GM12878 (cell line): ENCODE measurements at regions of chr2 and their contacts with region 1.

Region 1: GRCh38 chr2:127591221-127591923 is 54.6 kb upstream of the GPR17 start:
- DNase-seq: no peak
- ATAC-seq: peak; percentile 98
- H3K4me3 ChIP-seq: no peak overlapping the region
- H3K27ac ChIP-seq: no peak overlapping the region
- H3K4me1 ChIP-seq: no peaks in the 10 kb centered on the region
- H3K27me3 ChIP-seq: no peaks in the 10 kb centered on the region
- CTCF ChIP-seq: peak; percentile 96 to 99 (median 96); a peak in 5 of 6 replicates
- EP300 ChIP-seq: no peak
- POLR2A ChIP-seq: no peak
- RAD21 ChIP-seq: peak; percentile 97

Region 2: GRCh38 chr2:127563458-127564428 is 27.6 kb before region 1 on chr2:
- CTCF ChIA-PET with region 1: interaction called, 13 read pairs
- POLR2A ChIA-PET with region 1: no interaction called
- RAD21 ChIA-PET with region 1: interaction called, 6 read pairs
- SMC1A ChIA-PET with region 1: interaction called, 16 read pairs
- in situ Hi-C with region 1: no loop called
- intact Hi-C with region 1: no loop called
- DNase-seq: peak; percentile 92
- ATAC-seq: peak; percentile 92
- H3K4me3 ChIP-seq: peak overlapping the region; percentile 54
- H3K27ac ChIP-seq: peak overlapping the region; percentile 70
- H3K4me1 ChIP-seq: peaks cover 17% of the 10 kb centered on the region
- H3K27me3 ChIP-seq: 0 out of 4 replicates have a peak, but pooled peaks cover 0 to 4% of the 10 kb centered on the region in 2 experiments
- CTCF ChIP-seq: no peak
- EP300 ChIP-seq: peak; percentile 86 to 95
- POLR2A ChIP-seq: no peak
- RAD21 ChIP-seq: no peak

Region 3: DNA sequence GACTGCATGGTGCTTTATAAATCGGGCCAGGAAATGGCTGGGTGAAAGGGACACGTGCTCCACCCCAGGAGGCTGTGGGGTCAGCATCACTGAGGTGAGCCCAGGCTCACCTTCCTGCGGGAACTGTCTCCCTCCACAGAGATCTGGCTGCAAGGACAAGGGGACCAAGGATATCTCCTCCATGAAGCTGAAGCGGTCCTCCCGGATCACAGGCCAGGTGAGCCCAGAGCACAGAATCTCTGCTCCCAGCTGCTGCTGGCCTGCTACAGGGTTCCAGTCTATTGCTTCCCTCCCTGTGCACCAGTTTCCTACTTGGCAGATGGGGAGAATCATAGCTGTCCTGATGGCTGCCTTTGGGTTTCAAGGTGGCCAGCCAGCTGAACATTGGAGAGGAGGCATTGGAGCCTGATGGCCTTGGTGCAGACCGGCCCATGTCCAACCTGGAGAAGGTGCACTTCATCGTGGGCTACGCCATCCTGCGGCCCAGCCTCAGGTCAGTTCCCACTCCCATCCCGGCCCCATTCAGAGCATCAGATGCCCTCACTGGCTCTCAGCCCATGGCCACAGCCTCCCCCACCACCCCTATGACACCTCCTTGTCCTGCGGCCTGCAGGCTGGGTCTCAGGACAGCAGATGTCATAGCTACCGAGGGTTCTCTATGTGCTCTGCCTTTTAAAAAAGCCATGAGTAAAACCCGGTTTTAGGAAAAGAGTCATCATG is 20.9 kb after region 1 on chr2:
- CTCF ChIA-PET with region 1: interaction called, 15 read pairs
- POLR2A ChIA-PET with region 1: no interaction called
- RAD21 ChIA-PET with region 1: no interaction called
- SMC1A ChIA-PET with region 1: interaction called, 3 read pairs
- in situ Hi-C with region 1: no loop called
- intact Hi-C with region 1: no loop called
- DNase-seq: no peak
- ATAC-seq: no peak
- H3K4me3 ChIP-seq: no peak overlapping the region
- H3K27ac ChIP-seq: no peak overlapping the region
- H3K4me1 ChIP-seq: no peaks in the 10 kb centered on the region
- H3K27me3 ChIP-seq: no peaks in the 10 kb centered on the region; a peak in 2 of 4 replicates
- CTCF ChIP-seq: no peak
- EP300 ChIP-seq: no peak
- POLR2A ChIP-seq: no peak
- RAD21 ChIP-seq: no peak

Region 4: GRCh38 chr2:127649684-127650040 is 58.3 kb after region 1 on chr2:
- CTCF ChIA-PET with region 1: interaction called, 90 read pairs
- POLR2A ChIA-PET with region 1: no interaction called
- RAD21 ChIA-PET with region 1: interaction called, 23 read pairs
- SMC1A ChIA-PET with region 1: interaction called, 26 read pairs
- in situ Hi-C with region 1: no loop called
- intact Hi-C with region 1: loop called (anchors 1 kb)
- DNase-seq: peak; percentile 7
- ATAC-seq: peak; percentile 93
- H3K4me3 ChIP-seq: no peak overlapping the region
- H3K27ac ChIP-seq: no peak overlapping the region
- H3K4me1 ChIP-seq: no peaks in the 10 kb centered on the region
- H3K27me3 ChIP-seq: no peaks in the 10 kb centered on the region
- CTCF ChIP-seq: peak; percentile 78 to 82 (median 80)
- EP300 ChIP-seq: no peak
- POLR2A ChIP-seq: no peak
- RAD21 ChIP-seq: peak; percentile 79

Region 5: DNA sequence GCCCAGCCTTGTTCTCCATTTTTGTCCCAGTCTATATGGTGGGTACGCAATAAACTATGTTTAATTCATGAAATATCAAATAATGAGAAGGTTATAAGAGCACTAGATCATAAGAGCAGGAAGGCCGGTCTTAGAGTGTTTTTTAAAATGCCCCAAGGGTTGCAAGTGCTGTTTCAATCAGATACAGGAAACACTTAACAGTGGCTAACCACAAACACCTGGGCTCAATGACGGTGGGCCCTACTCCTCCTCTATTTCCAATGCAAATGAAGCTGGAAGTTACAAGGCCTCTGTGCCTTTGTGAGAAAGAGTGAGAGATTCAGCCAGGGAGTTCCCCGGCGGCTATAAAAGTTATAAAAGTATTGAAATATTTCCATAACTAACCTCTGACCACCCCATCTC is 238.5 kb after region 1 on chr2:
- CTCF ChIA-PET with region 1: no interaction called
- POLR2A ChIA-PET with region 1: interaction called, 3 read pairs
- RAD21 ChIA-PET with region 1: no interaction called
- SMC1A ChIA-PET with region 1: interaction called, 13 read pairs
- in situ Hi-C with region 1: no loop called
- intact Hi-C with region 1: no loop called
- DNase-seq: peak; percentile 96
- ATAC-seq: peak; percentile 94
- H3K4me3 ChIP-seq: peak overlapping the region; percentile 35; the same call in 1 of the 2 replicates
- H3K27ac ChIP-seq: peak overlapping the region; percentile 92
- H3K4me1 ChIP-seq: peaks cover 38% of the 10 kb centered on the region
- H3K27me3 ChIP-seq: no peaks in the 10 kb centered on the region
- CTCF ChIP-seq: no peak
- EP300 ChIP-seq: peak; percentile 92 to 94
- POLR2A ChIP-seq: no peak
- RAD21 ChIP-seq: no peak